ENCODE measurements at regions of chr10 and their contacts with region 1.

Region 1: GRCh38 chr10:100346765-100347567 is at the start of gene SCD:
- DNase-seq: peak; percentile 93
- ATAC-seq: peak; percentile 93
- H3K4me3 ChIP-seq: peak within 1 kb of the TSS; percentile 86
- H3K27ac ChIP-seq: peak within 1 kb of the TSS; percentile 72
- H3K4me1 ChIP-seq: peaks cover 18% of the 10 kb centered on the region
- H3K27me3 ChIP-seq: no peaks in the 10 kb centered on the region
- CTCF ChIP-seq: no peak
- EP300 ChIP-seq: 0 out of 4 replicates have a peak, but pooled peaks of 1 of the 2 experiments have one; percentile 10
- POLR2A ChIP-seq: peak; percentile 72
- RAD21 ChIP-seq: no peak
- polyA plus RNA-seq, gene SCD: 77.5 to 86.1 TPM

Region 2: GRCh38 chr10:100327007-100327717 is 19.8 kb before region 1 on chr10:
- CTCF ChIA-PET with region 1: interaction called, 84 read pairs
- POLR2A ChIA-PET with region 1: interaction called, 32 read pairs
- RAD21 ChIA-PET with region 1: interaction called, 32 read pairs
- SMC1A ChIA-PET with region 1: interaction called, 9 read pairs
- in situ Hi-C with region 1: no loop called
- intact Hi-C with region 1: no loop called
- DNase-seq: peak; percentile 90
- ATAC-seq: peak; percentile 100
- H3K4me3 ChIP-seq: no peak overlapping the region; the same call in 1 of the 2 replicates
- H3K27ac ChIP-seq: peak overlapping the region; percentile 70
- H3K4me1 ChIP-seq: peaks cover 15% of the 10 kb centered on the region
- H3K27me3 ChIP-seq: no peaks in the 10 kb centered on the region; a peak in 1 of 4 replicates
- CTCF ChIP-seq: no peak
- EP300 ChIP-seq: peak in 1 of 2 experiments; percentile 57; a peak in 1 of 4 replicates
- POLR2A ChIP-seq: peak; percentile 19; the same call in 1 of the 2 replicates
- RAD21 ChIP-seq: no peak

Region 3: DNA sequence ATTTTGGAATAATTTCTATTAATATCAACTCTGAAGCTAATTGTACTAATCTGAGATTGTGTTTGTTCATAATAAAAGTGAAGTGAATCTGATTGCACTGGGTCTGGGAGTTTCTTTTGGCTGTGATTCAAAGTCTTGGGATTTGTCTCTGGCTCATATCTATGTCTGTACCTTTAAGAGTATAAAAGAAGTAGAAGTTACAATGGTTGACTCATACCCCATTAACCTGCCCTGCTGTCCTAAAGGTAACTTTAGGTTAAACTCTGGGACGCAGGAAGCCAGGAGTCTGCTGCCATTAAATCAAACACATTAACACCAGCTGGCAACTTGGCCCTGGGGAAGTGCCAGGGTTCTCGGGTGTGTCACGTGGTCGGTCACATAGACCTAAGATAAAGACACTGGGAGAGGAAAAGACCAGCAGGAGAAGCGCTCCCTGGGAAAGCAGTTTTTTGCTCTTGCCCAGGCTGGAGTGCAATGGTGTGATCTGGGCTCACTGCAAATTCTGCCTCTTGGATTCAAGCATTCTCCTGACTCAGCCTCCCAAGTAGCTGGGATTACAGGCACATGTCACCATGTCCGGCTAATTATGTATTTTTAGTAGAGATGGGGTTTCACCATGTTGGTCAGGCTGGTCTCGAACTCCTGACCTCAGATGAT is 17.9 kb after region 1 on chr10:
- CTCF ChIA-PET with region 1: interaction called, 43 read pairs
- POLR2A ChIA-PET with region 1: interaction called, 47 read pairs
- RAD21 ChIA-PET with region 1: interaction called, 50 read pairs
- SMC1A ChIA-PET with region 1: interaction called, 76 read pairs
- in situ Hi-C with region 1: no loop called
- intact Hi-C with region 1: no loop called
- DNase-seq: no peak
- ATAC-seq: no peak; the same call in 2 of the 3 replicates
- H3K4me3 ChIP-seq: no peak overlapping the region
- H3K27ac ChIP-seq: no peak overlapping the region
- H3K4me1 ChIP-seq: no peaks in the 10 kb centered on the region; the same call in 1 of the 2 replicates
- H3K27me3 ChIP-seq: no peaks in the 10 kb centered on the region
- CTCF ChIP-seq: no peak
- EP300 ChIP-seq: no peak
- POLR2A ChIP-seq: no peak
- RAD21 ChIP-seq: no peak

Region 4: GRCh38 chr10:100373298-100374136 is 26.6 kb after region 1 on chr10:
- CTCF ChIA-PET with region 1: interaction called, 31 read pairs
- POLR2A ChIA-PET with region 1: interaction called, 191 read pairs
- RAD21 ChIA-PET with region 1: interaction called, 73 read pairs
- SMC1A ChIA-PET with region 1: interaction called, 118 read pairs
- in situ Hi-C with region 1: no loop called
- intact Hi-C with region 1: loop called (anchors 2 kb)
- DNase-seq: peak; percentile 85
- ATAC-seq: peak; percentile 95
- H3K4me3 ChIP-seq: peak overlapping the region; percentile 94
- H3K27ac ChIP-seq: peak overlapping the region; percentile 85
- H3K4me1 ChIP-seq: peaks cover 34% of the 10 kb centered on the region
- H3K27me3 ChIP-seq: no peaks in the 10 kb centered on the region
- CTCF ChIP-seq: no peak
- EP300 ChIP-seq: peak in 1 of 2 experiments; percentile 22; a peak in 1 of 4 replicates
- POLR2A ChIP-seq: peak; percentile 74
- RAD21 ChIP-seq: no peak

Measured in GM12878 (cell line).